ENCODE measurements at regions of chr15 and their contacts with region 1.

Region 1: GRCh38 chr15:55649054-55649423 is 60.9 kb upstream of the PYGO1 start:
- DNase-seq: peak; percentile 46
- H3K4me3 ChIP-seq: no peak overlapping the region
- CTCF ChIP-seq: no peak

Region 2: GRCh38 chr15:55526559-55527036 is 122.4 kb before region 1 on chr15:
- CTCF ChIA-PET with region 1: interaction called, 69 read pairs
- POLR2A ChIA-PET with region 1: no interaction called
- DNase-seq: no peak
- H3K4me3 ChIP-seq: no peak overlapping the region
- CTCF ChIP-seq: peak; percentile 68

Region 3: DNA sequence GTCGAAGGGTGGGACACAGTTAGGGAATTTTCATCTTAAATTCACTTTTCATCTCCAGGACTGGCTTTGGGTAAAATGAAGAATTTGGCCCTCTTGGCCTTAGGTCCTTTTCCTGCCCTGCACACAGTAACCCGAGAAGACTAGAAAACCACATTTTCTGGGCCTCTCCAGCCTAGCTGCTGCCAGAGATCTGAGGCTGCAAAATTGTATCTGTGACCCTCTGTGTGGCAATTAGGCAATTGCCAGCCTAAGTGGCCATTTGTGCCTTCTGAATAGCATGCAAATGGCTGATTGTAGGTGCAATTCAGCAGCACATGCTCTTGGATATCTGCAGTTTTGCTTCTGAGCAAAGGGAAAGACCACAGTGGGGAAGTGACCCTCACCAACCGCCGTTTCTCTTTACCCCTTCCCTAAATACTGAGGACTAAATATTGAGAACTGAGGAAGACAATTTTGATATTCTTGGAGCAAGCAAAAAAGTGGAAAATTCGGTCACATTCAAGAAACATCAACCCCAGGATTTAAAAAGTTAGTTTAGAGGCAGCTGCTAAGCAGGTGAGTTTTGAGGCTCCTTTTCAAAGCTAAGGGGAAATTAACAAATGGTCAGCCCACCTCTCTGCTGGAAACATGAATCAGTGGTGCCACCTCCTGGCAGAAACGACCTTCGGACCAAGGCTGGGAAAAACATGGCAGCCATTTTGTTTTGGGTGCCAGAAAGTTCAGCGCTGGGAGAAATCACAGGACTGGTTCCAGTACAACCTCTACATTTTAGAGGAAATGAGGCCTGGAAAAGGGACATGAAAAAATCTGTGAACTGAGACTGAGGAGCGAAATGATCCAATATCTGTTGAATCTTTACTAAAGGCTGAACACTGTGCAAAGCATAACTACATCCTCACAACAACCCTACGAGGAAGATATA is 150.5 kb after region 1 on chr15:
- CTCF ChIA-PET with region 1: interaction called, 59 read pairs
- POLR2A ChIA-PET with region 1: no interaction called
- DNase-seq: no peak
- H3K4me3 ChIP-seq: no peak overlapping the region
- CTCF ChIP-seq: peak; percentile 46

Region 4: DNA sequence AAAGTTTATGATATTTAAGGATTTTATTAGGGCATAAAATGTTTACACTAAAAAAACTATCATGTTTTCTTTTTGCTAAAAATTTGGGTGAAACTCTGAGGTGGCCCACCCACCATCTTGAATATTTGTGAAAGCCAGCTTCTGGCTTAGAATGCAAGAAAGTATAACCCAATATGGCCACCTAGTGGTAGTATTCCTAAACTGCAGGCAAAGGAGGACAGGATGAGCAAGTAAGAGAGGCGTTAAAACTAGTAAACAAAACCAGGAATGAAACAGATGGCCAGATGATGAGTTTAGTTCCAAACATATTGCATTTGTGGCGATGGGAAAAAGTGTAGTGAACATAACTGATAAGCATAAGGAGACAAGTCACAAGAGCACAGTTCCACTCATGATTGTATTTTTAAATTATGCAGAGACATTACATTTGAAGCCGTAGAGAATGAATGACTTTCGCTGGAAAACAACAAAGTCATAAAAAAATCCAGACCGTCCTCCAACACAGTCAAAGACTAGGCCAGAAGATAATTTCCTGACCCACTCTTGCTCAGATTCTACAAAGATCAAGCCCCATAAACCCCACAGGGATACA is 197.2 kb after region 1 on chr15:
- CTCF ChIA-PET with region 1: interaction called, 95 read pairs
- POLR2A ChIA-PET with region 1: no interaction called
- DNase-seq: peak; percentile 40
- H3K4me3 ChIP-seq: no peak overlapping the region
- CTCF ChIP-seq: peak; percentile 66

Region 5: GRCh38 chr15:56052395-56053045 is 403.5 kb after region 1 on chr15:
- CTCF ChIA-PET with region 1: interaction called, 22 read pairs
- POLR2A ChIA-PET with region 1: no interaction called
- DNase-seq: no peak
- H3K4me3 ChIP-seq: no peak overlapping the region
- CTCF ChIP-seq: peak; percentile 55